ENCODE measurements at regions of chr7 and their contacts with region 1.

Region 1: GRCh38 chr7:80018941-80019752 is 115.5 kb upstream of the GNAI1 start:
- DNase-seq: peak; percentile 55
- H3K4me3 ChIP-seq: no peak overlapping the region
- H3K27ac ChIP-seq: no peak overlapping the region
- H3K4me1 ChIP-seq: no peaks in the 10 kb centered on the region
- H3K27me3 ChIP-seq: no peaks in the 10 kb centered on the region
- CTCF ChIP-seq: peak; percentile 75 to 78
- POLR2A ChIP-seq: no peak

Region 2: DNA sequence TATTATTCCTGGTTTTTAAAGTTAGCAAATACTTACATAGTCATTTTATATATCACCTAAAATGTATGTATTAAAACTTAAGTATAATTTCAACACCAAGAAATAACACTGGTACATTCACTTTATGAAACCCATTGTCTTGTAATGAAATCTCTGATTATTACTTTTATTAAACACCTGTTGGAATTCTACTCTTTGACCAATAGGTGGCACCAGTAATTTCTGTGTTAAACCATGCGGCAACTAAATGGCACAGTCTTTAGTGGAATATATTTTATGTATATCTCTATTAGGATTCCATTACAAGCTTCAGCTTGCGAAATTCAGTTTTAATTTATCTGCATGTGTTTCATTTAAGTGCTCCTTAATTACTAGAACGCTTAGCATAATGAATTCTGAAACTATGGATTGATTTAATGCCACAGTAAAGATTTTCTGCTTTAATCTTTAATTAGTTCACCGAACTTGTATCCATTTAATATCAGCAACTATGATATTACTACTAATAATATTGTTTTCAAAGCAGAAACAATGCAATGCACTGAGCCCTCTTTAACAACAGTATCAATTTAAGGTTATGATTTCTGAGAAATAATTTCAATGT is 747.0 kb before region 1 on chr7:
- CTCF ChIA-PET with region 1: no interaction called
- POLR2A ChIA-PET with region 1: no interaction called
- dilution Hi-C with region 1: no loop called
- intact Hi-C with region 1: loop called (anchors 1 kb)
- DNase-seq: peak; percentile 55
- H3K4me3 ChIP-seq: no peak overlapping the region
- H3K27ac ChIP-seq: no peak overlapping the region
- H3K4me1 ChIP-seq: peaks cover 7% of the 10 kb centered on the region
- H3K27me3 ChIP-seq: no peaks in the 10 kb centered on the region
- CTCF ChIP-seq: peak; percentile 41 to 45
- POLR2A ChIP-seq: no peak

Region 3: DNA sequence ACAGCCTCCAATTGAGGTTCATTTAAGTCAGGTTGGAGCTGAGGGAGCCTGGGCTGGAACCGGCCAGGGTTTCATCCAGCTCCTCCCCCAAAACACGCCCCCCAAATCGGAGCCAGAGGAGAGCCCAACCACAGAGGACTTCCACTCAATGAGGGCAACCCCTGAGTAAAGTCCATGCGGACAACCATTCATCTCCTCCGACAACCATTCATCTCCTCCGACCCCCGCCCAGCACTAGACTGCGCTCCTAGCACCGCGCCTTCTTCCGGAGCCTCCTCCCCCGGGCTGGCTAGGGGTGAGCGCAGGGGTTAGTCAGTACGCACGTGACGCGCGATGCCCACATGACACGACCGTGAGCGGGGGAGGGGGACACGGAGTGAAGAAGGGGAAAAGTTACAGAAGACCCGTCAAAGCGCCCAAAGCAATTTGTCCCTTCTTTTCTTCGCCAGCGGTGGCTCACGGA is 567.1 kb before region 1 on chr7:
- CTCF ChIA-PET with region 1: no interaction called
- POLR2A ChIA-PET with region 1: no interaction called
- dilution Hi-C with region 1: no loop called
- intact Hi-C with region 1: loop called (anchors 5 kb)
- DNase-seq: peak; percentile 88
- H3K4me3 ChIP-seq: peak overlapping the region; percentile 78 to 84 (median 82)
- H3K27ac ChIP-seq: peak overlapping the region; percentile 78
- H3K4me1 ChIP-seq: peaks cover 19% of the 10 kb centered on the region
- H3K27me3 ChIP-seq: no peaks in the 10 kb centered on the region
- CTCF ChIP-seq: no peak
- POLR2A ChIP-seq: peak; percentile 74

Region 4: DNA sequence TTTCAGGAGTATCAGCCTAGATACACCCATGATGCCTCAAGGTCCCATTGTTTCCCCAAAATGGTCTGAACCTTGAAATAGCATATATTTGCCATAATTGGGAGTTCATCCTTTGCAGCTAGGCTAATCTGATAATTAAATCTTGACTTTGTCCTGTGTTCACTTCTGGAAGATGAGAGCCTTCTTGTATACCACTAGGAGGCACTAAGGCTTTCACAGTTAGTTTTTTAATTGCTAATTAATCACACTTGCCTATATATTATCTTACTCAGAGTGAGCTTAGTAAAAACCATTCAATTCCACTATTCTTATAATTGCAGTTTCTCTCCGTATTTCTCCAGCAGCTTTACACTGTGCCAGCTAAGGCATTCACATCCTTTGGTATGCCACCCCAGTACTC is 517.0 kb before region 1 on chr7:
- CTCF ChIA-PET with region 1: interaction called, 5 read pairs
- POLR2A ChIA-PET with region 1: no interaction called
- dilution Hi-C with region 1: no loop called
- intact Hi-C with region 1: loop called (anchors 2 kb)
- DNase-seq: peak; percentile 16
- H3K4me3 ChIP-seq: no peak overlapping the region
- H3K27ac ChIP-seq: no peak overlapping the region
- H3K4me1 ChIP-seq: no peaks in the 10 kb centered on the region
- H3K27me3 ChIP-seq: no peaks in the 10 kb centered on the region
- CTCF ChIP-seq: peak; percentile 28 to 39
- POLR2A ChIP-seq: no peak

Region 5: DNA sequence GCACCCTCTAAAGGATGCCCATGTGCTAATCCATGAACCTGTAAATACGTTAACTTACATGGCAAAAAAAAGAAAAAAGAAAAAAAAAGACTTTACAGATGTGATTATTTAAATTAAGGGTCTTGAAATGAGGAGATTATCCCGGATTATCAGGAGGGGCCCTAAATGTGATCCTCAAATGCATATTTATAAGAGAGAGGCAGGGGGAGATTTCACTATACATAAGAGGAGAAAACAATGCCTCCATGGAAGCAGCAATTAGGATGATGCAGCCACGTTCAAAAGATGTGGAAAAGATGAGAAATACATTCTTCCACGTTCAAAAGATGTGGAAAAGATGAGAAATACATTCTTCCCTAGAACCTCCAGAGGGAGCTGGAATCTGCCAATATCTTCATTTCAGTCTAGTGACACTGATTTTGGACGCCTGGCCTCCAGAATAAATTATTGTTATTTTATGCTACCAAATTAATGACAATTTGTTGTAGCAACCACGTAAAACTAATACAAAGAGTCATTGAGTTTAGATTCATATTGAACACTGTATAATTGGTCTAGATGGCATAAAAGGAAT is 212.9 kb before region 1 on chr7:
- CTCF ChIA-PET with region 1: interaction called, 6 read pairs
- POLR2A ChIA-PET with region 1: no interaction called
- dilution Hi-C with region 1: no loop called
- intact Hi-C with region 1: loop called (anchors 1 kb)
- DNase-seq: peak; percentile 17
- H3K4me3 ChIP-seq: no peak overlapping the region
- H3K27ac ChIP-seq: no peak overlapping the region
- H3K4me1 ChIP-seq: no peaks in the 10 kb centered on the region
- H3K27me3 ChIP-seq: no peaks in the 10 kb centered on the region
- CTCF ChIP-seq: no peak
- POLR2A ChIP-seq: no peak

Region 6: GRCh38 chr7:79982141-79982770 is 36.9 kb before region 1 on chr7:
- CTCF ChIA-PET with region 1: no interaction called
- POLR2A ChIA-PET with region 1: no interaction called
- dilution Hi-C with region 1: no loop called
- intact Hi-C with region 1: no loop called
- DNase-seq: peak; percentile 32
- H3K4me3 ChIP-seq: no peak overlapping the region
- H3K27ac ChIP-seq: no peak overlapping the region
- H3K4me1 ChIP-seq: peaks cover 21% of the 10 kb centered on the region
- H3K27me3 ChIP-seq: no peaks in the 10 kb centered on the region
- CTCF ChIP-seq: no peak
- POLR2A ChIP-seq: no peak

Measured in endothelial cell of umbilical vein (primary cell).